GM12878 (cell line): ENCODE measurements at regions of chr3 and their contacts with region 1.

Region 1: GRCh38 chr3:186930641-186931531 is 560 bp downstream of the ST6GAL1 start:
- DNase-seq: peak; percentile 52
- ATAC-seq: peak; percentile 92
- H3K4me3 ChIP-seq: peak overlapping the region; percentile 96
- H3K27ac ChIP-seq: peak overlapping the region; percentile 81
- H3K4me1 ChIP-seq: peaks cover 11% of the 10 kb centered on the region
- H3K27me3 ChIP-seq: no peaks in the 10 kb centered on the region
- CTCF ChIP-seq: peak; percentile 26 to 33 (median 31); a peak in 5 of 6 replicates
- EP300 ChIP-seq: no peak
- POLR2A ChIP-seq: peak; percentile 67
- RAD21 ChIP-seq: peak; percentile 47

Region 2: GRCh38 chr3:186946756-186947375 is 16.0 kb after region 1 on chr3:
- CTCF ChIA-PET with region 1: interaction called, 4 read pairs
- POLR2A ChIA-PET with region 1: interaction called, 11 read pairs
- RAD21 ChIA-PET with region 1: interaction called, 3 read pairs
- SMC1A ChIA-PET with region 1: interaction called, 9 read pairs
- in situ Hi-C with region 1: no loop called
- intact Hi-C with region 1: no loop called
- DNase-seq: no peak
- ATAC-seq: peak; percentile 89
- H3K4me3 ChIP-seq: peak overlapping the region; percentile 11; the same call in 1 of the 2 replicates
- H3K27ac ChIP-seq: peak overlapping the region; percentile 75
- H3K4me1 ChIP-seq: peaks cover 13% of the 10 kb centered on the region
- H3K27me3 ChIP-seq: no peaks in the 10 kb centered on the region
- CTCF ChIP-seq: no peak
- EP300 ChIP-seq: peak in 1 of 2 experiments; percentile 62; a peak in 2 of 4 replicates
- POLR2A ChIP-seq: no peak
- RAD21 ChIP-seq: no peak

Region 3: DNA sequence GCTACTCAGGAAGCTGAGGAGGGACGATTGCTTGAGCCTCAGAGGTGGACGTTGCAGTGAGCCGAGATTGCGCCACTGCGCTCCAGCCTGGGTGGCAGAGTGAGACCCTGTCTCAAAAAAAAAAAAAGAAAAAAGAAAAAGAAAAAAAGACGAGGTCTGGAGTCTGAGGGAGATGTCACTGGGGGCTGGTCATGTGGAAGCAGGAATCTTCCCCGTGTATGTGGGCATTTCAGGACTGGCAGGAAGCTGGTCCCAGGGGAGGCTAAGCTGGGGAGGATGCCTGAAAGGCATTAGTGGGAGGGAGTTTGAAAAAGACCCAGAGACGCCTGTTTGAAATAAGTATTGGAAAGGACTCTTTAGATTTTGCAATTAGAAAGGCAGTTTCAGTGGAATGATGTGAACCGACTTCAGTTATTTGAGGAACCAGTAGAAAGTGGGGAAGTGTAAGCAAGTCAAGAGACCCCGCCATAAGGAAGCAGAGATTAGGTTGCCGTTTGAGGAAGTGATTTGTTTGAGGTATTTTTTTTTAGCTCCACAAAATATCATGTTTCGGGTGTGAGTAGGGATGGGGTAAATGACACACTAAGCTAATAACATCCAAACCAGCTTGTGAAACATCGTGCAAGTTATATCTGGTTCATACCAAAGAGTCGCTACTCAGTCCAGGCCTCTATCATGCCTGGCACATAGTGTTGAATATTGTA is 54.9 kb after region 1 on chr3:
- CTCF ChIA-PET with region 1: interaction called, 4 read pairs
- POLR2A ChIA-PET with region 1: interaction called, 20 read pairs
- RAD21 ChIA-PET with region 1: interaction called, 24 read pairs
- SMC1A ChIA-PET with region 1: interaction called, 42 read pairs
- in situ Hi-C with region 1: no loop called
- intact Hi-C with region 1: loop called (anchors 5 kb)
- DNase-seq: peak; percentile 56
- ATAC-seq: peak; percentile 38
- H3K4me3 ChIP-seq: no peak overlapping the region; the same call in 1 of the 2 replicates
- H3K27ac ChIP-seq: peak overlapping the region; percentile 82
- H3K4me1 ChIP-seq: peaks cover 43% of the 10 kb centered on the region
- H3K27me3 ChIP-seq: no peaks in the 10 kb centered on the region
- CTCF ChIP-seq: no peak
- EP300 ChIP-seq: no peak
- POLR2A ChIP-seq: no peak
- RAD21 ChIP-seq: no peak

Region 4: GRCh38 chr3:187000711-187001151 is 69.8 kb after region 1 on chr3:
- CTCF ChIA-PET with region 1: interaction called, 10 read pairs
- POLR2A ChIA-PET with region 1: interaction called, 6 read pairs
- RAD21 ChIA-PET with region 1: interaction called, 32 read pairs
- SMC1A ChIA-PET with region 1: interaction called, 29 read pairs
- in situ Hi-C with region 1: no loop called
- intact Hi-C with region 1: loop called (anchors 1 kb)
- DNase-seq: peak; percentile 99
- ATAC-seq: peak; percentile 79
- H3K4me3 ChIP-seq: peak overlapping the region; percentile 46; the same call in 1 of the 2 replicates
- H3K27ac ChIP-seq: peak overlapping the region; percentile 91
- H3K4me1 ChIP-seq: peaks cover 51% of the 10 kb centered on the region
- H3K27me3 ChIP-seq: no peaks in the 10 kb centered on the region
- CTCF ChIP-seq: no peak
- EP300 ChIP-seq: peak; percentile 99 to 100
- POLR2A ChIP-seq: peak; percentile 66
- RAD21 ChIP-seq: no peak

Region 5: GRCh38 chr3:187031934-187032333 is 101.0 kb after region 1 on chr3:
- CTCF ChIA-PET with region 1: interaction called, 11 read pairs
- POLR2A ChIA-PET with region 1: interaction called, 20 read pairs
- RAD21 ChIA-PET with region 1: interaction called, 47 read pairs
- SMC1A ChIA-PET with region 1: interaction called, 42 read pairs
- in situ Hi-C with region 1: no loop called
- intact Hi-C with region 1: loop called (anchors 2 kb)
- DNase-seq: no peak
- ATAC-seq: peak; percentile 4; the same call in 2 of the 3 replicates
- H3K4me3 ChIP-seq: peak overlapping the region; percentile 47; the same call in 1 of the 2 replicates
- H3K27ac ChIP-seq: peak overlapping the region; percentile 57
- H3K4me1 ChIP-seq: peaks cover 43% of the 10 kb centered on the region
- H3K27me3 ChIP-seq: no peaks in the 10 kb centered on the region
- CTCF ChIP-seq: no peak
- EP300 ChIP-seq: no peak
- POLR2A ChIP-seq: 0 out of 2 replicates have a peak, but pooled peaks have one; percentile 16
- RAD21 ChIP-seq: no peak

Region 6: GRCh38 chr3:187066228-187066995 is 135.5 kb after region 1 on chr3:
- CTCF ChIA-PET with region 1: interaction called, 3 read pairs
- POLR2A ChIA-PET with region 1: interaction called, 3 read pairs
- RAD21 ChIA-PET with region 1: interaction called, 21 read pairs
- SMC1A ChIA-PET with region 1: interaction called, 7 read pairs
- in situ Hi-C with region 1: no loop called
- intact Hi-C with region 1: loop called (anchors 5 kb)
- DNase-seq: no peak
- ATAC-seq: peak; percentile 67
- H3K4me3 ChIP-seq: no peak overlapping the region
- H3K27ac ChIP-seq: peak overlapping the region; percentile 82
- H3K4me1 ChIP-seq: peaks cover 41% of the 10 kb centered on the region
- H3K27me3 ChIP-seq: no peaks in the 10 kb centered on the region
- CTCF ChIP-seq: peak; percentile 34 to 71 (median 48); a peak in 5 of 6 replicates
- EP300 ChIP-seq: no peak
- POLR2A ChIP-seq: peak; percentile 22; the same call in 1 of the 2 replicates
- RAD21 ChIP-seq: peak; percentile 71